ENCODE measurements at regions of chr16 and their contacts with region 1.

Region 1: GRCh38 chr16:29973384-29974246 is at the start of gene TAOK2:
- DNase-seq: peak; percentile 100
- CTCF ChIP-seq: no peak

Region 2: DNA sequence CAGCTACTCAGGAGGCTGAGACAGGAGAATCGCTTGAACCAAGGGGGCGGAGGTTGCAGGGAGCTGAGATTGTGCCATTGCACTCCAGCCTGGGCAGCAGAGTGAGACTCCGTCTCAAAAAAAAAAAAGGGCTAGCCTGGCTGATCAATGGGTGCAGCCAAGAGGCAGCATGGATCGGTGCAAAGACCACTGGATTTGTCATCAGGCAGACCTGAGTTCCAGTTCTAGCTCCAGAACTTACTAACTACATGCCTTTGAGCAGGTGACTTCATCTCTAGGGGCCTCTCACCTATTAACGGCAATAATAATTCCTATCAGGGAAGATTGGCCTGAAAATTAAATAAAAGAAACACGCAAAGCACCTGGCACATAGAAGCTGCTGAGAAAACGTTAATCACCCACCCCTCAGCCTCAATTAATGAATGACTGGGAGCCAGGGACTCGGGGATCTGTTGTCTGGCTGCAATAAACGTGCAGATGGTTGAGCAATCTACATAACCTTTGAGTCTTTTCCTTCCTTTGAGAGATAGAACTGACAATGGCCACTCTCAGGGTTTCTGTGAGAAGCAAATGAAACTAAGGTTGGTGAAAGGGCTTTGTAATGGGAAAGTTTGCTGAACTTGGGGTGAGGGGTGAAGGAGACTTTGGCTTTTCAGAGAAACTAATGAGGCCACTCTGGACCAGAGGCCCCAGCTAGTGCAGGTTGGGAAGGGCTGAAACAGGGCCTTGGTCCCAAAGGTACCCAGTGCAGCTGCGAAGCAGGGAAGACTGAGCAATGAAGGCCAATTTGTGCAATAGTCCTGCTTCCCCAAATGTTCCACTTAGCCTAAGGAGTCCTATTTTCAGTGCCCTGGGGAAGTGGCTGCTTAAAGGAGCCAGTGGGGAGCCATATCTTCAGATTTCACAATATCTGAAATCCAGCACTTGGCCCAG is 81.8 kb before region 1 on chr16:
- CTCF ChIA-PET with region 1: no interaction called
- POLR2A ChIA-PET with region 1: no interaction called
- DNase-seq: no peak
- CTCF ChIP-seq: no peak

Region 3: GRCh38 chr16:29961479-29962343 is 11.9 kb before region 1 on chr16 and contains the start of gene TMEM219:
- CTCF ChIA-PET with region 1: interaction called, 32 read pairs
- POLR2A ChIA-PET with region 1: interaction called, 5 read pairs
- DNase-seq: peak; percentile 99
- CTCF ChIP-seq: no peak

Region 4: DNA sequence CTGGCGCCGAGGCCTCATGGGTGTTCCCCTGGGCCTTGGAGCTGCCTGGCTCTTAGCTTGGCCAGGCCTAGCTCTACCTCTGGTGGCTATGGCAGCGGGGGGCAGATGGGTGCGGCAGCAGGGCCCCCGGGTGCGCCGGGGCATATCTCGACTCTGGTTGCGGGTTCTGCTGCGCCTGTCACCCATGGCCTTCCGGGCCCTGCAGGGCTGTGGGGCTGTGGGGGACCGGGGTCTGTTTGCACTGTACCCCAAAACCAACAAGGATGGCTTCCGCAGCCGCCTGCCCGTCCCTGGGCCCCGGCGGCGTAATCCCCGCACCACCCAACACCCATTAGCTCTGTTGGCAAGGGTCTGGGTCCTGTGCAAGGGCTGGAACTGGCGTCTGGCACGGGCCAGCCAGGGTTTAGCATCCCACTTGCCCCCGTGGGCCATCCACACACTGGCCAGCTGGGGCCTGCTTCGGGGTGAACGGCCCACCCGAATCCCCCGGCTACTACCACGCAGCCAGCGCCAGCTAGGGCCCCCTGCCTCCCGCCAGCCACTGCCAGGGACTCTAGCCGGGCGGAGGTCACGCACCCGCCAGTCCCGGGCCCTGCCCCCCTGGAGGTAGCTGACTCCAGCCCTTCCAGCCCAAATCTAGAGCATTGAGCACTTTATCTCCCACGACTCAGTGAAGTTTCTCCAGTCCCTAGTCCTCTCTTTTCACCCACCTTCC is 13.9 kb after region 1 on chr16:
- CTCF ChIA-PET with region 1: interaction called, 25 read pairs
- POLR2A ChIA-PET with region 1: interaction called, 5 read pairs
- DNase-seq: no peak
- CTCF ChIP-seq: no peak

Region 5: GRCh38 chr16:30005341-30006094 is 31.9 kb after region 1 on chr16:
- CTCF ChIA-PET with region 1: interaction called, 11 read pairs
- POLR2A ChIA-PET with region 1: no interaction called
- DNase-seq: peak; percentile 79
- CTCF ChIP-seq: peak; percentile 72